PC-3 (cell line): ENCODE measurements at regions of chr7 and their contacts with region 1.

Region 1: DNA sequence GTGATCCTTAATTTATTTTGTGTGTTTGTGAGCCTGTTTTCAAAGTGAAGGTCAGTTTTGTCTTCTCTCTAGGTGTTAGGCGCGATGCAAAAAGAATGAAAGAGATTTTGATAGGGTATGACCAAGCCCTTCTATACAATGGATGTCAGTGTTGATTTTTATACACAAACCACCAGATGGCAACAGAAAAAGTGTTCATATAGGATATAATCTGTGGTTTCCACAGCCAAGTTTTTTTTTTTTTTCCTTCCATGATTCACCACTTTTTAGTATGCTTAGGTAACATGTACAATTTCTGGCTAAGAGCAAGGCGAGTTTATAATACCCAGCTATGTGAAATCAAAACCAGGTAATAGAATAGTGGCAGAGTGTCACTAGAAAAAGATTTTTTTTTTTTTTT is 8.1 kb downstream of the SDK1 start:
- DNase-seq: peak; percentile 65
- ATAC-seq: peak; percentile 77
- H3K4me3 ChIP-seq: no peak overlapping the region
- H3K27ac ChIP-seq: no peak overlapping the region
- H3K4me1 ChIP-seq: no peaks in the 10 kb centered on the region
- H3K27me3 ChIP-seq: peaks cover 2% of the 10 kb centered on the region; the same call in 1 of the 2 replicates
- CTCF ChIP-seq: peak; percentile 40; the same call in 1 of the 2 replicates

Region 2: GRCh38 chr7:3380886-3381685 is 71.9 kb after region 1 on chr7:
- CTCF ChIA-PET with region 1: no interaction called
- POLR2A ChIA-PET with region 1: no interaction called
- intact Hi-C with region 1: loop called (anchors 5 kb)
- DNase-seq: no peak
- ATAC-seq: no peak
- H3K4me3 ChIP-seq: no peak overlapping the region
- H3K27ac ChIP-seq: no peak overlapping the region
- H3K4me1 ChIP-seq: peaks cover 17% of the 10 kb centered on the region
- H3K27me3 ChIP-seq: no peaks in the 10 kb centered on the region
- CTCF ChIP-seq: no peak

Region 3: DNA sequence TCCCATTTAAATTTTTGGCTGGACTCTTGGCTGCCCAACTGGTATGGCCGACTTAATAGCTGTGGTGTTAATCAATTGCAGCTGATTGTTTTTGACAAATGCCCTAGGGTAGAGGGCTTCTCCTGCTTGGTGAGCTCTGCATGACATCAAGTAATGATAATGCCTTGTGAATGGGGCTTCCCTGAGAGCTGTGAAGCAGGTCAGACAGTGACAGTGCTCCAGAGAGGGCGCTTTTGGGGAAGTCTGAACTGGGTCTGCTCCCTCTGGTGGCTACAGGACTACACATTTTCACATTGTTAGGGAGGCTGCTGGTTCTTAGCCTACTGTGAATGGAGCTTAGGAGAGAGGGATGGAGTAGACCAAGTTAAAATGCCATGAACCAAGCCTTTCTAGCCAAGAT is 90.7 kb after region 1 on chr7:
- CTCF ChIA-PET with region 1: interaction called, 9 read pairs
- POLR2A ChIA-PET with region 1: no interaction called
- intact Hi-C with region 1: loop called (anchors 2 kb)
- DNase-seq: peak; percentile 55
- ATAC-seq: peak; percentile 96
- H3K4me3 ChIP-seq: no peak overlapping the region
- H3K27ac ChIP-seq: no peak overlapping the region
- H3K4me1 ChIP-seq: peaks cover 10% of the 10 kb centered on the region
- H3K27me3 ChIP-seq: no peaks in the 10 kb centered on the region
- CTCF ChIP-seq: peak; percentile 73

Region 4: DNA sequence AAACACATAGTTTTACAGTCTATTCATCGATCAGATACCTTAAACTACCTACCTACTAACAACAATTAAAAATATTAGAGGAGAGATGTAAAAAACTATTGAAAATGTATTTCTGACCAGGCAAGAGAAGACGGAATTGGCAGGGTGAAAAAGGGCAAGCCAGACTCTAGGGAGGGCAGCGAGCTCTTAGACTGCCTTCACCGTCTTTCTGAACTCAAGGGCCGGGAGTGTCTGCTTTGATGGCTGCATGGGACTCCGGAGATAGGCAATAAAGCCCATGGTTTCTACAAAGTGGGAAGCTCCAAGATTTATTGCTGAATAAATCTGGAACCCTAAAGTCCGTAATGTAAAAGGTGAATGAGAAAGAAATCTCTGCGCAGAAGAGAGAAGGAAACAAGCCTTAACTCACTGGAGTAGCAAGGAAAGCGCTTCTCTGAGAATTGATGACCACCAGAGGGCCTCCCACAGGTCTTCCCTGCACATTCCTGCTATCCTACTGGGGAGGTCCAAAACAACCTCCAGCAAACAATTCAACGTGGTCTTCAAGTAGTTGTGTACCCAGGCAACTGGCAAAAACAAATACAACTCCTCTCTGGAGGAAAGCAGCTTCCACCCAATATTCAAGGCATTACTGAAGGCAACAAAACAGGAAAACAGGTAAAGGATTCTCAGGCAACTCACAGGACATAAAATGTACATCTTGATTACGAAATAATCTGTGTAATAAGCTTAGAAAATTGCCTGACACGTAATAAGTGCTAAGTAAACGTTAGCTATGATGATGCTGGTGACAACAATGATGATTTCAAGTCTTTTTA is 173.2 kb after region 1 on chr7:
- CTCF ChIA-PET with region 1: no interaction called
- POLR2A ChIA-PET with region 1: no interaction called
- intact Hi-C with region 1: loop called (anchors 5 kb)
- DNase-seq: peak; percentile 53
- ATAC-seq: peak; percentile 77
- H3K4me3 ChIP-seq: no peak overlapping the region
- H3K27ac ChIP-seq: no peak overlapping the region
- H3K4me1 ChIP-seq: no peaks in the 10 kb centered on the region
- H3K27me3 ChIP-seq: no peaks in the 10 kb centered on the region
- CTCF ChIP-seq: peak; percentile 77

Region 5: DNA sequence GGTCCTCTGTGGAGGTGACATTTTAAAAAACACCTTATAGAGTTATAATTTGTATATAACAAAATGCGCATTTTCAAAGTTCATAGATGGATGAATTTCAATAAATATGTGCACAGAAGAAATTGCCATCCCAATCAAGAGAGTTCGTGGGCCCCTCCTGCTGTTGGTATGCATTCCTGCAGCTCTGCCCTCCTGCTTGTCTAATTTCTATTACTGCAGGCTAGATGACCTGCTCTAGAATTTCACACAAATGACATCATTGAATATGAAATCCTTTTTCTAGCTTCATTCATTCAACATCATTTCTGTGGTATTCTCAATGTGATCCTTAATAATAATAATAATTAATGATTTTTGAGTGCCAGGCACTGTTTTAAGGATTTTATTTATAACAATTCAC is 340.1 kb after region 1 on chr7:
- CTCF ChIA-PET with region 1: no interaction called
- POLR2A ChIA-PET with region 1: no interaction called
- intact Hi-C with region 1: loop called (anchors 2 kb)
- DNase-seq: peak; percentile 13
- ATAC-seq: no peak
- H3K4me3 ChIP-seq: no peak overlapping the region
- H3K27ac ChIP-seq: no peak overlapping the region
- H3K4me1 ChIP-seq: no peaks in the 10 kb centered on the region
- H3K27me3 ChIP-seq: no peaks in the 10 kb centered on the region
- CTCF ChIP-seq: peak; percentile 45